ENCODE measurements at regions of chr3 and their contacts with region 1.

Region 1: DNA sequence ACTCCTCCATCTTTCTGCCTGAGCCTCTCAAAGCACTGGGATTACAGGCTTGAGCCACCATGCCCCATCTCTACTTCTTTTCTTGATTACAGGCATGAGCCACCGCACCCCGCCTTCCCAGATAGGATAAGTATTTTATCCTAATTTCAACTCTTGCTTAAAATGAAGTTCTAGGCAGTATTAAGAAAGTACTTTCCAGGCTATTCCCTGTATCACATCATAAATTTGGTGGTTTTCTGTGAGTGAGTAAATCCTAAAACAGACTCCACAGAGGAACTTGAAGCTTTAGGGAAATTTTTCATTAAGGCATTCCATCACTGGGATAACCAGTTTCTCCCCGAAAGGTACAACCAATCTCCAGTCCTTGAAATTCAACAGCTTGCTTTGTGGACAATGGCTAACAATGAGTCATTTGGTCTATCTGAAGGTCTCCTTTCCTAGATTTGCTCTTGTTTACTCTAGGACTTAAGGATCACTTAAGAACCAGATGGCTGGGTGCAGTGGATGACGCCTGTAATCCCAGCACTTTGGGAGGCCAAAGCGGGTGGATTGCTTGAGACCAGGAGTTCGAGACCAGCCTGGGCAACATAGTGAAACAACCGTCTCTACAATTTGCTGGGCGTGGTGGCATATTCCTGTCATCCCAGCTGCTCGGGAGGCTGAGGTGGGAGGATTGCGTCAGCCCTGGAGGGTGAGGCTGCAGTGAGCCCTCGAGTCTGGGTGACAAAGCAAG is 49.7 kb upstream of the SKIL start:
- DNase-seq: no peak
- ATAC-seq: no peak

Region 2: DNA sequence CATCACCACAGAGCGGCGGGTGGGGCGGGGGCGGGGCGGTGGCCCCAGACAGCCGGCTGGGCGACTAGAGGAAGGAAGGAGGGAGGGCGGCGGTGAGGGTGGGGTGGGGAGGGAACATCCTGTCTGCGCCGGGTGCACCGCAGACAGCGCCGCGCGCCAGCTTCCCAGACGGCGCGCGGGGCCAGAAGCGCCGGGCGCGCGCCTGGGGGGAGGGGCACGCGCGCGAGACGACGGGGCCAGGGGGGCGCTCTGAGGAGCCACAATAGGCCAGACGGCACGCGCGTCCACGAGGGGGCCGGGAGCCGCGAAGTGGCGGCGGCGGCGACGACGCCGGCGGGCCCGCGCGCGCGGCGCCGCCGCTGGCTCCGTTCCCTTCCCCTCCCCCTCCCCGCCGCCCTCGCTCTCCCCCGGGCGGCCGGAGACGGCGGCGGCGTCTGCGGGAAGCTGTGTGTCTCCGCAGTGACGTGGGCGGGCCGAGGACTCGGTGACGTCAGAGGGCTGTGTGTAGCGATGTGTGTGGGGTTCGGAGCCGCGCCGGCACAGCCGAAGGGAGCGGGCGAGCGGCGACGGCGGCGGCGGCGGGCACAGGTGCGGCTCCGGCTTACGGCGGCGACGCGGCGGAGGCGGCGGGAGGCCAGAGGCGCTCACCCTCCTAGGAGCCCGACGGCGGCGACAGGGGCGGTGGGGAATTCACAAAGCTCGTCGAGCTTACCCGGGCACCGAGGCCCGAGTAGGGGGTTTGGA is 49.5 kb after region 1 on chr3 and contains the start of gene SKIL:
- intact Hi-C with region 1: loop called (anchors 2 kb)
- DNase-seq: peak; percentile 100
- ATAC-seq: peak; percentile 87
- total RNA-seq, gene SKIL: 14.2 TPM